Adrenal gland (tissue), 19 donors: ENCODE measurements at regions of chr9 and their contacts with region 1.

Region 1: DNA sequence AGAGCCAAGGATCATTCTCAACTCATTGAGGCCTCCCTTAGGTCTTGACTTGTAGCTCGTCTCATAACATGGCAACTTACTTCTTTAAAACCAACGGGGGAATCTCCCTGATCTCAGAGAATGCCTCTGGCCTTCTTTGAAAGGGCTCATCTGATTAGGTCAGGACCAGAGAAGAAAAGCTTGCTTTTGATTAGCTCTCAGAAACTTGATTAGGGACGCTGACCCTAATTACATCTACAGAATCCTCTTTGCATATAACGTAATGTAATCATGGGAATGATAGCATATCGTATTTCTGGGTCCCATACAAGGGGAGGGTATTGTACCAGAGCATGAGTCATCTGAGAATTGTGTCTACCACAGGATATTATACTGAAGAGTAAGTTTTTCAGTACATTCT is 125.1 kb upstream of the SH3GL2 start:
- DNase-seq: no peak
- H3K4me3 ChIP-seq: no peak overlapping the region
- H3K27ac ChIP-seq: no peak overlapping the region
- H3K4me1 ChIP-seq: no peaks in the 10 kb centered on the region
- H3K27me3 ChIP-seq: no peaks in the 10 kb centered on the region
- CTCF ChIP-seq: no peak
- POLR2A ChIP-seq: no peak

Region 2: DNA sequence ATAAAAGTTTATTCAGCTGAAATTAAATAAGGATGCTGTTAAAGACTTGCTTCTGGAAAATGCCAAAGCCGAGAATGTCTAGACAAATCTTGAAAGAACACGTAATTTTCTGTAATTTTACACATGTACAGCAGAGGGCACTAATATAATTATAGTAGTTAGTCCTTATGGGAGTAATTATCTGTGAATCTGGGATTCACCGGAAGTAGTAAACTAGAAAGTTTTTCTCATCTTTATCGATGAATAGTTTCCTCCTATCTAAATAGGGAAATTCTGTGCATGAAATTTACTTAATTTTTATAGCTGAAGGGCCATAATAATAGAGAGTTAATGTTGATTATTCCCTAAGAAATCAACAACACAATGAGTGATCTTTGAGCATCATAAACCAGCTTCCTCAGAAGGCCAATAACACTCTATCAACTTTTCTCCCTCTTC is 337.3 kb before region 1 on chr9:
- intact Hi-C with region 1: loop called in 1 of 2 experiments (anchors 5 kb)
- DNase-seq: no peak
- H3K4me3 ChIP-seq: no peak overlapping the region
- H3K27ac ChIP-seq: no peak overlapping the region
- H3K4me1 ChIP-seq: no peaks in the 10 kb centered on the region
- H3K27me3 ChIP-seq: no peaks in the 10 kb centered on the region
- CTCF ChIP-seq: peak; percentile 29 to 64 (median 55)
- POLR2A ChIP-seq: no peak

Region 3: GRCh38 chr9:17229945-17230560 is 223.7 kb before region 1 on chr9:
- intact Hi-C with region 1: loop called in 1 of 2 experiments (anchors 10 kb)
- DNase-seq: no peak
- H3K4me3 ChIP-seq: no peak overlapping the region
- H3K27ac ChIP-seq: no peak overlapping the region
- H3K4me1 ChIP-seq: peaks cover 0 to 8% of the 10 kb centered on the region in 2 donors
- H3K27me3 ChIP-seq: no peaks in the 10 kb centered on the region
- CTCF ChIP-seq: no peak
- POLR2A ChIP-seq: no peak